ENCODE measurements at regions of chr1 and their contacts with region 1.

Region 1: GRCh38 chr1:98048244-98048643 is 127.4 kb upstream of the DPYD start:
- DNase-seq: peak; percentile 84
- ATAC-seq: peak; percentile 69
- H3K4me3 Mint-ChIP-seq: peak overlapping the region; percentile 18
- H3K27ac Mint-ChIP-seq: no peak overlapping the region
- H3K4me1 Mint-ChIP-seq: peaks cover 38% of the 10 kb centered on the region
- H3K27me3 Mint-ChIP-seq: peaks cover 90% of the 10 kb centered on the region

Region 2: GRCh38 chr1:97758541-97759057 is 289.6 kb before region 1 on chr1:
- CTCF ChIA-PET with region 1: no interaction called
- DNase-seq: no peak
- ATAC-seq: no peak
- H3K4me3 Mint-ChIP-seq: no peak overlapping the region
- H3K27ac Mint-ChIP-seq: no peak overlapping the region
- H3K4me1 Mint-ChIP-seq: no peaks in the 10 kb centered on the region
- H3K27me3 Mint-ChIP-seq: no peaks in the 10 kb centered on the region

Region 3: GRCh38 chr1:97920832-97921571 is 127.2 kb before region 1 on chr1 and contains the start of gene DPYD:
- CTCF ChIA-PET with region 1: interaction called, 17 read pairs
- DNase-seq: peak; percentile 92
- ATAC-seq: peak; percentile 91
- H3K4me3 Mint-ChIP-seq: peak within 1 kb of the TSS; percentile 96
- H3K27ac Mint-ChIP-seq: peak within 1 kb of the TSS; percentile 98
- H3K4me1 Mint-ChIP-seq: peaks cover 51% of the 10 kb centered on the region
- H3K27me3 Mint-ChIP-seq: no peaks in the 10 kb centered on the region
- total RNA-seq, gene DPYD: 31.4 to 42.3 TPM